Motor neuron (in vitro differentiated cells): ENCODE measurements at regions of chr9 and their contacts with region 1.

Region 1: GRCh38 chr9:136631038-136632000 is 31.4 kb upstream of the EGFL7 start:
- ATAC-seq: peak; percentile 69 to 96 (median 74)
- H3K4me3 ChIP-seq: no peak overlapping the region
- H3K27ac ChIP-seq: no peak overlapping the region
- H3K4me1 ChIP-seq: peaks cover 32 to 38% of the 10 kb centered on the region in 2 donors

Region 2: GRCh38 chr9:136482793-136483588 is 148.3 kb before region 1 on chr9 and contains the start of gene SEC16A:
- in situ Hi-C with region 1: loop called in 3 of 9 experiments (anchors 10 to 25 kb)
- ATAC-seq: peak; percentile 57 to 75 (median 62)
- H3K4me3 ChIP-seq: peak within 1 kb of the TSS; percentile 86 to 99 (median 93)
- H3K27ac ChIP-seq: peak within 1 kb of the TSS; percentile 100
- H3K4me1 ChIP-seq: peaks cover 21 to 29% of the 10 kb centered on the region in 2 donors
- total RNA-seq, gene SEC16A: 21.8 to 59.1 (median 35.0) TPM

Region 3: GRCh38 chr9:136493567-136493971 is 137.8 kb before region 1 on chr9:
- in situ Hi-C with region 1: loop called in 8 of 9 experiments (anchors 5 to 25 kb)
- ATAC-seq: peak in 6 of 8 experiments; percentile 12 to 60 (median 34)
- H3K4me3 ChIP-seq: no peak overlapping the region
- H3K27ac ChIP-seq: no peak overlapping the region
- H3K4me1 ChIP-seq: peaks cover 3 to 15% of the 10 kb centered on the region in 2 donors

Region 4: DNA sequence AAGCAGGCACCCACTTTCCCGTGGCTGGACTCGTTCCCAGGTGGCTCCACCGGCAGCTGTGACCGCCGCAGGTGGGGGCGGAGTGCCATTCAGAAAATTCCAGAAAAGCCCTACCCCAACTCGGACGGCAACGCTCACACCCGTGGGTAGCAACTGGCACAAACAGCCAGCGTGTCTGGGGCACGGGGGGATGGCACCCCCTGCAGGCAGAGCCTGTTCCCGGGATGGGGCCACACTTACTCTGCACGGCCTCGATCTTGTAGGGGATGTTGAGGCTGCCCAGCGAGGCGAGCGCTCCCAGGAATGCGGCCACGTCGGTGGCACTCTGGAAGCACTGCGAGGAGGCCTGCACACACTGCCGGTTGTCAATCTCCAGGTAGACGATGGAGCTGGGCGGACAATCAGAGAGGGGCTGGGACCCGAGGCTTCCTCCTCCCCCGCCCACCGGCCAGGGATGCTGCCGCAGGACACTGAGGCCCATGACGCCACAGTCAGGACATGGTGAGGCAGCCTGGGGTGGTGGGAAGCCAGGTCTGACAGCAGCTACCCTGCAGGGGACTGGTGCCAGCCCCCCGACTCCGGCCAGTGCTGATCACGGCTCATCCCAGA is 128.3 kb before region 1 on chr9:
- in situ Hi-C with region 1: loop called in 5 of 9 experiments (anchors 10 to 25 kb)
- ATAC-seq: no peak
- H3K4me3 ChIP-seq: no peak overlapping the region
- H3K27ac ChIP-seq: no peak overlapping the region
- H3K4me1 ChIP-seq: no peaks in the 10 kb centered on the region